ENCODE measurements at regions of chr3 and their contacts with region 1.

Region 1: GRCh38 chr3:51799879-51800749 is 21.1 kb upstream of the IQCF6 start:
- DNase-seq: peak; percentile 8
- H3K4me3 Mint-ChIP-seq: no peak overlapping the region
- H3K27ac Mint-ChIP-seq: no peak overlapping the region
- H3K4me1 Mint-ChIP-seq: peaks cover 31% of the 10 kb centered on the region
- H3K27me3 Mint-ChIP-seq: peaks cover 25% of the 10 kb centered on the region

Region 2: DNA sequence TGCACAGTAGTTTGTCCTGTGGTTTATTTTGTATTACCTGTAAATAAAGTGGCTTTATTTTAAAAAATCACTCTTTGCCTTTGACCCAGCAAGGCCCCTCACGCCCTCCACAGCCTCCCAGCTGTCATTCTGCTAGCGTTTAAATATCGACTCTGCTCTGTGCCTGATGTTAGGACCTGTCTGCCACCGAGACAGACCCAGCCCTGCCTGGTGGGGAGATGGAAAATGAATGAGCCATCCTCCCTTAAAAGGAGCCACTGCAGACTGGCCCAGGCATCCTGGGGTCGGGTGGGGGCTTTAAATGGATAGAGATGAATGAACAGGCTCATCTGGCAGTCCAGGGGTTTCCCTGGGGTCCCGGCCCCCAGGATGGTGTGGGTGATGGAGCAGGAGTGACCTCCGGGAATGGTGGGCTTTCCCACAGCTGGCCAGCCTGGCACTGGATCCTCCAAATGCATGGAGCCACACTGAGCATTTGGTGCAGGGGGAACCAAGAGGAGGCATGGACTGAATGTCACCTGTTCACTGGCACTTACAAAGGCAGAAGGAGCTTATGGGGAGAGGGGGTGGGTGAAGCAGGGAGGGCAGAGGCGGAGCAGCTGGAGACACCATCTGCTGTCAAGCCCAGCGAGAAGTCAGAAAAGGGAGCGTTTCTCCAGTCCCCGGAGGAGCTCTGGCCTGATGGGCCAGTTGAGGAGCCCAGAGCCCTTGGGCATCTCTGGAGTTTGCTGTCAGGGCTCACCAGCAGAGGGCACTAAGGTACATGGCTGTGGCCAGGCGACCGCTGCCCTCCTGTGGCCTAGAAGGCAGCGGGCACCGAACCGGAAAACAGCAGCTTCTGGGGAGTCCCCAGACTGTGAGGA is 81.3 kb before region 1 on chr3:
- intact Hi-C with region 1: loop called (anchors 1 kb)
- DNase-seq: peak; percentile 63
- H3K4me3 Mint-ChIP-seq: no peak overlapping the region
- H3K27ac Mint-ChIP-seq: no peak overlapping the region
- H3K4me1 Mint-ChIP-seq: peaks cover 16% of the 10 kb centered on the region
- H3K27me3 Mint-ChIP-seq: peaks cover 2% of the 10 kb centered on the region

Region 3: GRCh38 chr3:51967384-51968169 is 167.5 kb after region 1 on chr3 and contains the start of gene PCBP4:
- intact Hi-C with region 1: no loop called
- DNase-seq: no peak
- H3K4me3 Mint-ChIP-seq: peak within 1 kb of the TSS; percentile 85
- H3K27ac Mint-ChIP-seq: peak within 1 kb of the TSS; percentile 64
- H3K4me1 Mint-ChIP-seq: peaks cover 5% of the 10 kb centered on the region
- H3K27me3 Mint-ChIP-seq: no peaks in the 10 kb centered on the region
- total RNA-seq, gene PCBP4: 21.1 and 23.8 TPM in 2 replicates

Region 4: GRCh38 chr3:52834871-52835501 is 1034.9 kb after region 1 on chr3 and contains the start of gene MUSTN1:
- intact Hi-C with region 1: no loop called
- DNase-seq: no peak
- H3K4me3 Mint-ChIP-seq: no peak within 1 kb of the TSS
- H3K27ac Mint-ChIP-seq: no peak within 1 kb of the TSS
- H3K4me1 Mint-ChIP-seq: peaks cover 20% of the 10 kb centered on the region
- H3K27me3 Mint-ChIP-seq: no peaks in the 10 kb centered on the region
- total RNA-seq, gene MUSTN1: 1.9 and 2.6 TPM in 2 replicates

Measured in activated T-helper 2 cell treated with anti-CD3 and anti-CD28 coated beads, Interferon-gamma antibody, Interleukin-2, Interleukin-4, amounts not matched to agents 10 μg/mL and 5 μg/mL and 100 μg/mL, durations not matched to agents 14 hours and 24 hours and 36 hours (primary cell).